Activated CD4-positive, alpha-beta T cell treated with anti-CD3 and anti-CD28 coated beads, Interleukin-2, amount 10 ng/mL, durations not matched to agents 24 days and 14 days (primary cell): ENCODE measurements at regions of chr19 and their contacts with region 1.

Region 1: DNA sequence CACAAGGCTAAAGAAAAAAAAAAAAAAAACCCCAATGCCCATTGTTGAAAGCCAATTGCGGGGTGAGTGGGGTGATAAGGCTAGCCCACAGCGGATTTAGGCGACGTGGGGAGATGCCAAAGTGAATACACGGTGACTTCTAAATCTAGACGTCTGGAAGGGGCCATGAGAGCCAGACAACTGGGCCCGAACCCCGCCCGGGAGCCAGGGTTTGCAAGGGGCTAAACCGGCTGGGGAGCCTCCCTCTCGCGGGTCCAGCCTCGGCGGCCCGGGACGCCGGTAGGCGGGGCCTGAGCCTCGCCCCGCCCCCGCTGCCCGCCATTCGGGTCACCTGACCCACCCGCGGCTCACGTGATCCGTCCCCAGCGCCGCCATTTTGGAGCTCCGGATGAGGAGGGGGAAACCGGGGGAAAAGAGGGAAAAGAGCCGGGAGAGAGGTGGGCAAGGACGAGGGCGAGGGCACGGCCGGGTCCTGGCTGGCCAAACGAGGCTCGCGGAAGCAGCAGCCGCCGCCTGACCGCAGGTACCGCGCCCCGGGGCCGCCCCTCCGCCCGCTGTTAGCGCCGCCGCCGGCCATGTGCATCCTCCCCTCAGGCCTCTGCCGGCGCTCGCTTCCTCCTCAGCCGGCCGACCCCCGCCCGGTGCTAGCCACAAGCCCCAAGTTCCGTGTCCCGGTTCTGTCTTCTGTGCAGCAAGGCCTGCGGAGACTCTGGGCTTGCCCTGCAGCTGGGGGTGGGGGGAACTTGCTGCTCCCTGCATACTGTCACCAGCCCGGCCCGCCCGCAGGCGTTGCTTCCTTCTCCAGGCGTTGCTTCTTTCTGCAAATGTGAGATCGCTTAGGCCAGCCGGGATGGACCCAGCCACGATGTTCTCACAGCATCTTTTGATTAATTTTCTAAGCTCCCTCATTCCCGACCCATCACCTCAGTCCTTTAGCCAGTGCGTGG is at the start of gene ZNF507:
- DNase-seq: peak; percentile 96
- H3K4me3 Mint-ChIP-seq: peak within 1 kb of the TSS; percentile 92
- H3K27ac Mint-ChIP-seq: peak within 1 kb of the TSS; percentile 95
- H3K4me1 Mint-ChIP-seq: peaks cover 30% of the 10 kb centered on the region
- H3K27me3 Mint-ChIP-seq: peaks cover 8% of the 10 kb centered on the region
- total RNA-seq, gene ZNF507: 33.1 and 34.7 TPM in 2 replicates

Region 2: GRCh38 chr19:32405431-32406161 is 60.1 kb after region 1 on chr19 and contains the start of gene DPY19L3:
- intact Hi-C with region 1: loop called (anchors 2 kb)
- DNase-seq: peak; percentile 98
- H3K4me3 Mint-ChIP-seq: peak within 1 kb of the TSS; percentile 89
- H3K27ac Mint-ChIP-seq: peak within 1 kb of the TSS; percentile 90
- H3K4me1 Mint-ChIP-seq: peaks cover 6% of the 10 kb centered on the region
- H3K27me3 Mint-ChIP-seq: no peaks in the 10 kb centered on the region
- total RNA-seq, gene DPY19L3: 19.1 and 19.5 TPM in 2 replicates

Region 3: GRCh38 chr19:32580901-32581703 is 235.6 kb after region 1 on chr19 and contains the start of gene PDCD5:
- intact Hi-C with region 1: loop called (anchors 2 kb)
- DNase-seq: peak; percentile 98
- H3K4me3 Mint-ChIP-seq: peak within 1 kb of the TSS; percentile 93
- H3K27ac Mint-ChIP-seq: peak within 1 kb of the TSS; percentile 90
- H3K4me1 Mint-ChIP-seq: peaks cover 24% of the 10 kb centered on the region
- H3K27me3 Mint-ChIP-seq: peaks cover 8% of the 10 kb centered on the region
- total RNA-seq, gene PDCD5: 213 and 231 TPM in 2 replicates